GM10248 (cell line): ENCODE measurements at regions of chr20 and their contacts with region 1.

Region 1: GRCh38 chr20:59782986-59783640 is 150.3 kb downstream of the SYCP2 start:
- DNase-seq: peak; percentile 82
- CTCF ChIP-seq: peak; percentile 93

Region 2: GRCh38 chr20:59837623-59838394 is 54.7 kb after region 1 on chr20:
- CTCF ChIA-PET with region 1: interaction called, 12 read pairs
- POLR2A ChIA-PET with region 1: no interaction called
- DNase-seq: peak; percentile 24
- CTCF ChIP-seq: no peak

Region 3: DNA sequence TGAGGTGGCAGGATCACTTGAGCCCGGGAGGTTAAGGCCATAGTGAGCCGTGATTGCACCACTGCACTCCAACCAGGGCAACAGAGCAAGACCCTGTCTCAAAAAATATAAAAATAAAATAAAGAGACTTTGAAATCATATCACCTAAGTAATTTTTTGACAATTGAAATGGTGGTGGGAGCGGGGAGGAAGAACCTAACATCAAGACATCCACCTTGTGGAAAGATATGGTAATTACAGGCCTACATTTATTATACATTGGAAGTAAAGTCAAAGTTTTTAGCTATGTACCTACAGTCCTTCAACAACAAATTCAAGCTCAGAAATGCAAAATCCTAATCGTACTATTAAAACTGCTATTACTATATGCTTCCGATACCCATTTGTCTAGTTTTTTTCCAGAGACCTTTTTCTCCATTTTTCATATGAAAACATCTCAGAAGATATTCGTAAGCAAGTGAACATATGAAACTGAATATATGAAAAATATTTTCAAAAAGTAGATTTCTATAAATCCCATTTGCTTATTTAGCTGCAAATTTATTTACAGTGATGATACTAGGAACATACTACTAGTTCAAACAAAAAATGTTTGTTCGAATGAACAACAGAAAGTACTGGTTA is 67.0 kb after region 1 on chr20:
- CTCF ChIA-PET with region 1: interaction called, 89 read pairs
- POLR2A ChIA-PET with region 1: no interaction called
- DNase-seq: no peak
- CTCF ChIP-seq: peak; percentile 45